Posterior vena cava (tissue), 2 donors: ENCODE measurements at regions of chr4 and their contacts with region 1.

Region 1: DNA sequence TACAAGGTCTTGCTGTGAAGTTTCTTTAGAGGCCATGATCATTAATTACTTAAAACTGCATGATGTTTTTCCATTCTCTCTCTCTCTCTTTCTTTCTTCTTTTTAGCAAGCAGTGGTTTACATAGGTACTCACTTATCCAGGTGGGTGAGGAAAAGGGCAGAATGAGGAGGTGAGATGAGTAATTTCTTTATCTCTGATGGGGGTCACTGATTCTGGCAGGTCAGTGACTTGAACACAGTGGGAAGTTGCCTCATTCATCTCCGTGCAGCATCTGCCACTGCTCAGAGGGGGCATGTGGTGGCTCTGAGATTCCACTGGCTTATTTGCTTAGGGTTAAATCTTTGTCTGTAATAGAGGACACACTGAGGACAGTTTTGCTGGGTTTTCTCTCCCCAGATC is 62.6 kb downstream of the FAM114A1 start:
- DNase-seq: no peak

Region 2: DNA sequence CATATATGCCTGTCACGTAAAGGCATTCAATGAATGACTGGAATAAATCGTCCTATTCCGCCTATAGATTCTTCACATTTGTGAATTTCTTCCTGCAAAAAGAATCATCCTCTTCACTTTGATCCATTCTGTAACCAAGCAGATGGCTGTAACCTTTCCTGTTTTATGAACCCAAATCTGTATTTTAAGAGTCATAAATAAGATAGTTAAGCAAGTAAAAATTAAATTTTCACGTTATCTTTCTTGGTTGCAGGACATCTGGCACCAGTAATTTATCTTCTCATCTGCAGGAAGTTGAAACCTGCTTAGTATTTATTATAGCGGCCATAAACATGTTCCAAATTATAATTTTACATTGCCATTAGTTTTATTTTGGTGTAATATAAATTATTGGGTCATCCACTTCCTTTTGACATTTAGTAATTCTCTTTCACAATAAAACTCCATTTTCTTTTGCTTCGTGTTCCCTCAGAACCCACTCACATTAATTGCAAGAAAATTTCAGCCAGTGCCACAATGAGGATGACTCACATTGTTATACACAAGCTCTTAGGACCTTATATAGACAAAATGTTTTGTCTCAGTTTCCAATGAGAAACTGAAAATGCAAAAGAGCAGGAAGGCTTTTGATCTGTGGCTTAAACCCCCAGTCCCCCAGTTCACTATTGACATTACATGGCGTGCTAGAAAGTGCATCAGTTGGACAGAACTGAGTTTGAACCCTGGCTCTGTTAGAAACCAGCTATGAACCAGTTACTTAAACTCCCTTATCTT is 50.9 kb after region 1 on chr4:
- intact Hi-C with region 1: loop called in 1 of 2 experiments (anchors 5 kb)
- DNase-seq: no peak

Region 3: GRCh38 chr4:39067451-39067850 is 137.2 kb after region 1 on chr4:
- intact Hi-C with region 1: no loop called
- DNase-seq: no peak